ENCODE measurements at regions of chr1 and their contacts with region 1.

Region 1: DNA sequence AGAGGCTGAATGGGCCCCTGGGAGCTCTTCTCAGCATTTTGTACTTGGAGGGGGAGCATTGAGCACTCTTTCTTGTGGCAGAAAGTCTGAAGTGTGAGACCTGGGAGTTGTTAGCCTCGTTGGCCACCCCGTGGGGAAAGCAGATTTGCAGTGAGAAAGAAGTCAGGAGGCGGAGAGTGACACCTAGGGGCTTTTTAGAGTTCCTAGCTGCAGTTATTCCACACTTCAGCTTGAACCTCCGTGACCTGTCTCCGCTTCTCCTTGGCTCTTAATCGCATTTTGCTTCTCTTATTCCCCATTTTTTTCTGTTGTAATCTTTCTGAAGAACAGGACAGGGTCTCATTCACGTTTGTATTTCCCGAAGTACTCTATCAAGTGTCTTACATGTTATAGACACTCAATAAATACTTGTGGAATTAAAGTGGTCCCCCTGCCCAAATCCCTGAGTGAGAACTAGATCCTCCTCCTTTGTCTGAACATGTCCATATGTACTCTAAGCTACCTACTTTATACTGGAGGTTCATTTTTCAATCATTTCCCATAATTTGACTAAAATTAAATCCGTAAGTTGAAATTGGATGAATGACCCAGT is 14.5 kb upstream of the C1orf141 start:
- DNase-seq: peak; percentile 77
- ATAC-seq: peak; percentile 86
- H3K4me3 Mint-ChIP-seq: no peak overlapping the region
- H3K27ac Mint-ChIP-seq: peak overlapping the region; percentile 58
- H3K4me1 Mint-ChIP-seq: peaks cover 42% of the 10 kb centered on the region
- H3K27me3 Mint-ChIP-seq: peaks cover 33% of the 10 kb centered on the region

Region 2: GRCh38 chr1:66957938-66958337 is 191.3 kb before region 1 on chr1:
- CTCF ChIA-PET with region 1: interaction called, 13 read pairs
- POLR2A ChIA-PET with region 1: no interaction called
- DNase-seq: no peak
- ATAC-seq: no peak
- H3K4me3 Mint-ChIP-seq: no peak overlapping the region
- H3K27ac Mint-ChIP-seq: no peak overlapping the region
- H3K4me1 Mint-ChIP-seq: peaks cover 19% of the 10 kb centered on the region
- H3K27me3 Mint-ChIP-seq: no peaks in the 10 kb centered on the region

Region 3: DNA sequence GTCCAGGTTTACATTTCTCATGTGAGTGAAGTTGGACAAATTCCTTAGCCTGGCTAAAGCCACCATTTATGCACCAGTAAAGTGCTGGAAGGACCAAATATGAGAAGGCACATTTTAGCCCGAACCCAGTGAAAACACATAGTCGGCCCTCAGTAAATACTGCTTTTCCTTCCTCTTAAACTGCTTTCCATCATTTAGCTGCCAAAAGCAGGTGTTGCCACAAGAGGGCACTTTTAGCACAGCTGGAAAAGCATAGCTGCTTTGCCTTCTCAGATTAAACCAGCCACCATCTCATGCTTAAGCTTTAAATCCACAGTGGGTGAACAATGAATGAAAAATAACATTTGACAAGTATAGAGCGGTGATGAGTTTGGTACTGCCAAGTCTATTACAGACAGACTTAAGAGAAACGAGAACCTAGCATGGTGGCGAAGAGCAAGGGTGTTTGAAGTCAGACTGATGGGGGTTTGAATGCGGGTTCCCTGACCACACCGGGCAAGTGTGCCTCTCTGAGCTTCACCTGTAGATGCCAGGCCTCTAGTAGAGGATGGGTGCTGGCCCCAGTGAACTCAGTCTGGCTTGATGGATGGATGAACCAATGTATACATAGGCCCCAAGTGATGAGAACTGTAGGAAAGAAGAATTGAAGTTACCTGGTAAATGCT is 153.1 kb before region 1 on chr1:
- CTCF ChIA-PET with region 1: interaction called, 89 read pairs
- POLR2A ChIA-PET with region 1: interaction called, 4 read pairs
- DNase-seq: peak; percentile 78
- ATAC-seq: peak; percentile 72
- H3K4me3 Mint-ChIP-seq: no peak overlapping the region
- H3K27ac Mint-ChIP-seq: no peak overlapping the region
- H3K4me1 Mint-ChIP-seq: peaks cover 20% of the 10 kb centered on the region
- H3K27me3 Mint-ChIP-seq: no peaks in the 10 kb centered on the region

Region 4: GRCh38 chr1:67013573-67013972 is 135.7 kb before region 1 on chr1:
- CTCF ChIA-PET with region 1: interaction called, 16 read pairs
- POLR2A ChIA-PET with region 1: no interaction called
- DNase-seq: no peak
- ATAC-seq: peak; percentile 36
- H3K4me3 Mint-ChIP-seq: no peak overlapping the region
- H3K27ac Mint-ChIP-seq: no peak overlapping the region
- H3K4me1 Mint-ChIP-seq: peaks cover 2% of the 10 kb centered on the region
- H3K27me3 Mint-ChIP-seq: no peaks in the 10 kb centered on the region

Region 5: GRCh38 chr1:67134695-67135094 is 14.6 kb before region 1 on chr1 and contains the start of gene C1orf141:
- CTCF ChIA-PET with region 1: interaction called, 24 read pairs
- POLR2A ChIA-PET with region 1: no interaction called
- DNase-seq: peak; percentile 35
- ATAC-seq: peak; percentile 77
- H3K4me3 Mint-ChIP-seq: peak within 1 kb of the TSS; percentile 63
- H3K27ac Mint-ChIP-seq: no peak within 1 kb of the TSS
- H3K4me1 Mint-ChIP-seq: peaks cover 13% of the 10 kb centered on the region
- H3K27me3 Mint-ChIP-seq: no peaks in the 10 kb centered on the region
- total RNA-seq, gene C1orf141: not detected

Region 6: GRCh38 chr1:67171978-67172377 is 22.7 kb after region 1 on chr1:
- CTCF ChIA-PET with region 1: interaction called, 30 read pairs
- POLR2A ChIA-PET with region 1: no interaction called
- DNase-seq: no peak
- ATAC-seq: peak; percentile 31
- H3K4me3 Mint-ChIP-seq: peak overlapping the region; percentile 50
- H3K27ac Mint-ChIP-seq: peak overlapping the region; percentile 85
- H3K4me1 Mint-ChIP-seq: peaks cover 49% of the 10 kb centered on the region
- H3K27me3 Mint-ChIP-seq: peaks cover 7% of the 10 kb centered on the region

Region 7: DNA sequence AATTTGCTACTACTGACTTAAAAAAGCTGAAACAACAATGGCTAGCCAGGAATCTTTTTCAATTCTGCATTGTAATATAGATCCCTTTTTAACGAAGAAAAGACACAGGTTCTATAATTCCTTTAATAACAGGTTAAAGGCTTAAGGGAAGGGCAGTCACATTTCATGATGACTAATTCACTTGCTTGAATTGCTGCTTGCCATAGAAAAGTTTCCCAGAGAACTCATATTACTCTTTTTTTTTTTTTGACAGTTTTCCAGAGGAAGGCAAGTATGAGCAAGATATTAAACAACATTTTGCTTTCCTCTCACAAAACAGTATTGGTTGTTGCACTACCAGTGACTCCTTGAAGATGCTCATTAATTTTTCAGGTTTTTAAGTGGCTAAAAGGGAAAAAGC is 77.9 kb after region 1 on chr1:
- CTCF ChIA-PET with region 1: no interaction called
- POLR2A ChIA-PET with region 1: no interaction called
- DNase-seq: no peak
- ATAC-seq: no peak
- H3K4me3 Mint-ChIP-seq: no peak overlapping the region
- H3K27ac Mint-ChIP-seq: no peak overlapping the region
- H3K4me1 Mint-ChIP-seq: peaks cover 5% of the 10 kb centered on the region
- H3K27me3 Mint-ChIP-seq: peaks cover 7% of the 10 kb centered on the region

Region 8: DNA sequence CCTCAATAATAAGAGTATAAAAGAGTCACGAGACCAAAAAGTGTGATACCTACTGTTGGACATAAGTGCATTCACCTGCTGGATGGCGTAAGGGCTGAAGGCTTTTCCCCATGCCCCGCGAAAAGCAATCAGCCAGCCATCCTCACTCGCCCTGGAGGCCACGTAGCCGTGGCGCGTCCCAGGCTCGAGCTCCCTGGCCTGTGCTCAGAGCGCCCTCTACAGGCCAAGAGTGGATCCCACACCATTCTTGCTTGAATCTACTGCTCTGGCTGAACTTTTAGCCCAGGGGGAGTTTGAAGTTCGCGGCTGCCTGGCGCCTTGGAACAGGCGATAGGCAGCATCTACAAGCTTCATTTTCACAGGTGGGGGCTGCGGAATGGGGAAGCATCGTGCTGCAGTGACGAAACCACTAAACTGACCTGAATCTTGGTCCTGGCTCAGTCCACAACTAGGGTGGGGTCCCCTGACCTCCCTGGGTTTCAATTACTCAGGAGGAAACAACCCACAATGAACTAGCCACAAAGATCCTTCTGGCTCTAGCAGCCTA is 351.2 kb after region 1 on chr1:
- CTCF ChIA-PET with region 1: interaction called, 13 read pairs
- POLR2A ChIA-PET with region 1: no interaction called
- DNase-seq: peak; percentile 92
- ATAC-seq: peak; percentile 100
- H3K4me3 Mint-ChIP-seq: peak overlapping the region; percentile 18
- H3K27ac Mint-ChIP-seq: no peak overlapping the region
- H3K4me1 Mint-ChIP-seq: peaks cover 4% of the 10 kb centered on the region
- H3K27me3 Mint-ChIP-seq: peaks cover 9% of the 10 kb centered on the region